CD8-positive, alpha-beta T cell (primary cell): ENCODE measurements at regions of chr22 and their contacts with region 1.

Region 1: DNA sequence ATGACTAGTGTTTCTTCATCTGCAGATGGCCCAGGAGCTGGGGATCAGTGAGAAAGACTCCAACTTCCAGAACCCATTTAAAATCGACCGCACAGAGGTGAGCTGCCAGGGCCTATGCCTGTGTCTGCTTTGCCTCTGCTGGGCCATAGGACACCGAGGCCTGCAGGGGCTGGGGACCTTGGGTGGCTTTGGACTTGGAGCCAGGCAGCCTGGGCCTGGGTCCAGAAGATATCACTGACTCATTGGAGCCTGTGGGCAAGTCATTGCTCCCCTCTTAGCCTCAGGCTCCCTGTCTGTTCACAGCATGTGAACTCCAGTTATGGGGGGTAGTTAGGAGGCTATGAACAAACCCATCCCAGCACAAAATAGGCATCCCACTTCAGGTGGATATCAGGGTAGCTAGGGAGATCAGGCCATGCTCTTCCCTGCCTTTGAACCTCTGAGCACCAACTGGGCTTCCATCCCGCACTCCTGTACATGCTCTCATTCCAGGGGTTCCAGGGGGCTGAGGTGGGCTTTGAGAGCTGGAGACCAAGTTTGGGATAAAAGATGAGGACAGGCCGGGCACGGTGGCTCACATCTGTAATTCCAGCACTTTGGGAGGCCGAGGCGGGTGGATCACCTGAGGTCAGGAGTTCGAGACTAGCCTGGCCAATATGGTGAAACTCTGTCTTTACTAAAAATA is 13.4 kb downstream of the CCDC134 start:
- DNase-seq: no peak
- ATAC-seq: no peak
- H3K4me3 ChIP-seq: no peak overlapping the region
- H3K4me3 Mint-ChIP-seq: no peak overlapping the region
- H3K27ac ChIP-seq: no peak overlapping the region
- H3K27ac Mint-ChIP-seq: no peak overlapping the region
- H3K4me1 ChIP-seq: no peaks in the 10 kb centered on the region
- H3K4me1 Mint-ChIP-seq: no peaks in the 10 kb centered on the region
- H3K27me3 ChIP-seq: no peaks in the 10 kb centered on the region
- H3K27me3 Mint-ChIP-seq: no peaks in the 10 kb centered on the region
- CTCF ChIP-seq: no peak

Region 2: GRCh38 chr22:41666661-41667258 is 147.1 kb before region 1 on chr22:
- CTCF ChIA-PET with region 1: no interaction called
- POLR2A ChIA-PET with region 1: no interaction called
- intact Hi-C with region 1: no loop called
- DNase-seq: peak; percentile 89 to 97 (median 92)
- ATAC-seq: peak; percentile 94
- H3K4me3 ChIP-seq: peak overlapping the region; percentile 30 to 46
- H3K4me3 Mint-ChIP-seq: peak overlapping the region; percentile 84
- H3K27ac ChIP-seq: peak overlapping the region; percentile 57 to 85
- H3K27ac Mint-ChIP-seq: peak overlapping the region; percentile 96
- H3K4me1 ChIP-seq: peaks cover 9% of the 10 kb centered on the region
- H3K4me1 Mint-ChIP-seq: peaks cover 7% of the 10 kb centered on the region
- H3K27me3 ChIP-seq: no peaks in the 10 kb centered on the region
- H3K27me3 Mint-ChIP-seq: no peaks in the 10 kb centered on the region
- CTCF ChIP-seq: peak; percentile 94

Region 3: GRCh38 chr22:41713004-41713403 is 100.9 kb before region 1 on chr22:
- CTCF ChIA-PET with region 1: no interaction called
- POLR2A ChIA-PET with region 1: no interaction called
- intact Hi-C with region 1: loop called in 1 of 2 experiments (anchors 5 kb)
- DNase-seq: no peak
- ATAC-seq: no peak
- H3K4me3 ChIP-seq: no peak overlapping the region
- H3K4me3 Mint-ChIP-seq: no peak overlapping the region
- H3K27ac ChIP-seq: no peak overlapping the region
- H3K27ac Mint-ChIP-seq: no peak overlapping the region
- H3K4me1 ChIP-seq: no peaks in the 10 kb centered on the region
- H3K4me1 Mint-ChIP-seq: no peaks in the 10 kb centered on the region
- H3K27me3 ChIP-seq: no peaks in the 10 kb centered on the region
- H3K27me3 Mint-ChIP-seq: no peaks in the 10 kb centered on the region
- CTCF ChIP-seq: no peak

Region 4: DNA sequence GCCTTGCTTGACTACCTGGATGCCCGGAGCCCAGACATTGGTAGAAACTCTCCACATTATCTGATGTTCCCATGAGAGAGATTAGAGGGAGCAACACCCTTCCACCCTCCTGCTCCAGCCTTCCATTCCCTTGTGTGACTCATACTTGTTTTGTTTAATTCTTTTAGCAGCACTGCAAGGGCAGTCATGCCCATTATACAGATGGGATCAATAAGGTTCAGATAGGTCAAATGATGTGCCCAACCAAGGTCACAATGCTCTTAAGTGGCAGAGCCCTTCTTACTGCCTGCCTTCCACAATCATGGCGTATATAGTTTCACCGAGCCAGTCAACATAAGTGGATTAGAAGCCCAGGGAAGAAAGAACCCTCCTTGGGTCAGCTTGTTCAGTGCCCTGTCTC is 20.0 kb before region 1 on chr22:
- CTCF ChIA-PET with region 1: no interaction called
- POLR2A ChIA-PET with region 1: no interaction called
- intact Hi-C with region 1: no loop called
- DNase-seq: no peak
- ATAC-seq: no peak
- H3K4me3 ChIP-seq: no peak overlapping the region
- H3K4me3 Mint-ChIP-seq: no peak overlapping the region
- H3K27ac ChIP-seq: no peak overlapping the region
- H3K27ac Mint-ChIP-seq: no peak overlapping the region
- H3K4me1 ChIP-seq: no peaks in the 10 kb centered on the region
- H3K4me1 Mint-ChIP-seq: peaks cover 14% of the 10 kb centered on the region
- H3K27me3 ChIP-seq: no peaks in the 10 kb centered on the region
- H3K27me3 Mint-ChIP-seq: no peaks in the 10 kb centered on the region
- CTCF ChIP-seq: no peak